PC-9 (cell line): ENCODE measurements at regions of chr2 and their contacts with region 1.

Region 1: DNA sequence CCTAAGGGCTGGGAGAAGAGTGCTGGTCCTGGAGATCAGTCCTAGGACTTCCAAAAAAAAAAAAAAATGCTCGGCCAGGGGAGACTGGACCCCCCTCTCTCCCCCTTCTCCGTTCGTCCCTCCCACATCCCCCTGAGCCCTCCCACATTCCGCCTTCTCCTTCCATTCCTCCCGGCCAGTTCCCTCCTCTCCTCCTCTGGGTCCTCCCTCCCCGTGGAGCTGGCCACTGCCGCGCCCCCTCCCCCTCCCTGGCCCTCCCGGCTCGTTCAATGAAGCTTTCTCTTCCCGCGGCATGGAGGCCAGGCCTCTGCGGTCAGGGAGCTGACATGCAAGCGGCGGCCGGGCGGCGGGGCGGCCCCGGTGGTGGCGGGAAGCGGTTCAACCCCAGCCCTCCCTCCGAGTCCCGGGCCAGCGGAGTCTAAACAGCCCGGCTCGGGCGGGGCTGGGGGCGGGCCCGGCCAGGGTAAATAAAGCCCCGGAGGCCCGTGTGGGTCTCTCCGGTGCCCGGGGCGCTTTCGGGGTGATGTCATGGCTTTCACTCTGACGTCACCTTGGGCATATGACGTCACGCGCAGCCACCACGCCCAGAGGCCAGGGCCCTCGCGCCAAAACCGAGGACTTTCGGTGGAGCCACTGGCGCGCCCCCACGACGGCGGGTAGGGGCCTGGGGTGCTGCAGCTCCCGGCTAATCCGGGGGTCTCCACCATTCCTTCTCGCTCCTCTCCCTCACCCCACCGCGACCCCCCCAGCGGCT is at the start of gene LOXL3:
- DNase-seq: peak; percentile 57 to 74
- H3K4me3 ChIP-seq: peak within 1 kb of the TSS; percentile 78
- H3K27ac ChIP-seq: no peak within 1 kb of the TSS
- H3K4me1 ChIP-seq: peaks cover 16% of the 10 kb centered on the region
- H3K27me3 ChIP-seq: no peaks in the 10 kb centered on the region
- CTCF ChIP-seq: no peak
- total RNA-seq, gene LOXL3: 3.1 and 5.0 TPM in 2 replicates

Region 2: GRCh38 chr2:73385595-73386341 is 1168.3 kb before region 1 on chr2 and contains the start of gene ALMS1:
- CTCF ChIA-PET with region 1: no interaction called
- POLR2A ChIA-PET with region 1: interaction called, 14 read pairs
- intact Hi-C with region 1: no loop called
- DNase-seq: peak; percentile 80 to 86
- H3K4me3 ChIP-seq: peak within 1 kb of the TSS; percentile 99
- H3K27ac ChIP-seq: peak within 1 kb of the TSS; percentile 62
- H3K4me1 ChIP-seq: peaks cover 18% of the 10 kb centered on the region
- H3K27me3 ChIP-seq: peaks cover 21% of the 10 kb centered on the region
- CTCF ChIP-seq: no peak
- total RNA-seq, gene ALMS1: 14.7 and 16.7 TPM in 2 replicates

Region 3: DNA sequence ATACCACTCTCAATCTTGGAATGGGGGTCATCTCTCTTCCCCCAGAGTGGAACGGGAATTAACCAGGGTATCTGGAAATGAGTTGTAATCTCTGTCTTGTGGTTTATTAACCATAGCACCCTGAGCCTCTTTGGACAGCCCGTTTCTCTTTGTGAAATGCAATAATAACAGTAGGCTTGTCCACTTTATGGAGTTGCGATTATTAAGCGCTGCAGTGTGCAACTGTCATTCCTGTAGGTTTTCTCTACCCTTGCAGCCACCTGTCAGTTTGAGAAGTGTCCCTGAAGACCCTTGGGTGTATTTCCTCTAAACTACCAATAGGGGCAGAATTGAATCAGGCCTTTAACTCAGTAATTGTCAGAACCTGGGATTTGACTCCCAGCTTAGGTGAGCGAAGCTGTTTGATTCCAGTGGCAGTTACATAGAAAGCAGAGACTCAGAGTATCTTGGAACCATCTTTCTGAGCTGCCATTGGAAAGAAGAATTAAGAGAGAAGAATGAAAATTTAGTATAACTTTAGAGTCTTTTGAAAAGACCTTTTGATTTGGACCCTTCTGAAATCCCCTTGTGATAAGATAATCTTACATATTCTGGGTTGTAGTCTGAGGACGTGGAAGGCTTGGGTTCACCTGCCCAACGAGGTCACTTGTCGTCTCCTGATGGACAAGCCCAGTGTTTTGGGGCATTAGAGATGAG is 282.4 kb after region 1 on chr2:
- CTCF ChIA-PET with region 1: no interaction called
- POLR2A ChIA-PET with region 1: no interaction called
- intact Hi-C with region 1: no loop called
- DNase-seq: peak in 1 of 2 experiments; percentile 65
- H3K4me3 ChIP-seq: peak overlapping the region; percentile 91
- H3K27ac ChIP-seq: peak overlapping the region; percentile 84
- H3K4me1 ChIP-seq: peaks cover 45% of the 10 kb centered on the region
- H3K27me3 ChIP-seq: no peaks in the 10 kb centered on the region
- CTCF ChIP-seq: peak; percentile 95

Region 4: DNA sequence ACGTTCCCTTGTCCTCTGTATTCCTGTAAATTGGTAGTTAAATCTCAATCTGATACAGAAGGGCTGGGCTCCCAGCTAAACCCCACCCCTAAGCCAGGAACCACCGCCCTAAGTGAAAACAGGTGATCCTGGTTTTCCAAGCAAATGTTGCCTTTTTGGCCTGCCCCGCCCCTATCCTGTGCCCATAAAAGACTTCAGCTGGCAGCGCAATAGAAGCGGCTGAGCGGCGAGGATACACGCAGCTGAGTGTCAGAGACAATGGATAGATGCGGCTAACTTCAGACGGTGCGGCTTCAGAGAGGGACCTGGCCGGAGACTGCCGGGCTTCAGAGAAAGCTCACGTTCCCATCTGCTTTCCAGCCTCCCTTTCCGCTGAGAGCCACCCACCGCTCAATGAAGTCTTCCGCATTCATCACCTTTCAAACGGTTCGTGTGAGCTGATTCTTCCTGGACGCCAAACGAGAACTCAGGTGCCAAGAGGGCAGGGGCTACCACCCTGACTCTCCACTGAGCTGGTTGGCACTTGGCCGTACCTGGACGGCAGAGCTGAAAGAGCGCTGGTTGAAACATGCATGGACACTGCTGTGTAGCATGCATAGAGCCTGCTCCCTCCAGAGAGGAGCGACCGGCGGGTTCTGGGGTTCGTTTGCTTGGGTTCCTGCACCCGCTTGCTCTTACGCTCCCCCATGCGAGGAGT is 354.8 kb after region 1 on chr2:
- CTCF ChIA-PET with region 1: no interaction called
- POLR2A ChIA-PET with region 1: no interaction called
- intact Hi-C with region 1: no loop called
- DNase-seq: no peak
- H3K4me3 ChIP-seq: no peak overlapping the region
- H3K27ac ChIP-seq: no peak overlapping the region
- H3K4me1 ChIP-seq: no peaks in the 10 kb centered on the region
- H3K27me3 ChIP-seq: no peaks in the 10 kb centered on the region
- CTCF ChIP-seq: no peak

Region 5: DNA sequence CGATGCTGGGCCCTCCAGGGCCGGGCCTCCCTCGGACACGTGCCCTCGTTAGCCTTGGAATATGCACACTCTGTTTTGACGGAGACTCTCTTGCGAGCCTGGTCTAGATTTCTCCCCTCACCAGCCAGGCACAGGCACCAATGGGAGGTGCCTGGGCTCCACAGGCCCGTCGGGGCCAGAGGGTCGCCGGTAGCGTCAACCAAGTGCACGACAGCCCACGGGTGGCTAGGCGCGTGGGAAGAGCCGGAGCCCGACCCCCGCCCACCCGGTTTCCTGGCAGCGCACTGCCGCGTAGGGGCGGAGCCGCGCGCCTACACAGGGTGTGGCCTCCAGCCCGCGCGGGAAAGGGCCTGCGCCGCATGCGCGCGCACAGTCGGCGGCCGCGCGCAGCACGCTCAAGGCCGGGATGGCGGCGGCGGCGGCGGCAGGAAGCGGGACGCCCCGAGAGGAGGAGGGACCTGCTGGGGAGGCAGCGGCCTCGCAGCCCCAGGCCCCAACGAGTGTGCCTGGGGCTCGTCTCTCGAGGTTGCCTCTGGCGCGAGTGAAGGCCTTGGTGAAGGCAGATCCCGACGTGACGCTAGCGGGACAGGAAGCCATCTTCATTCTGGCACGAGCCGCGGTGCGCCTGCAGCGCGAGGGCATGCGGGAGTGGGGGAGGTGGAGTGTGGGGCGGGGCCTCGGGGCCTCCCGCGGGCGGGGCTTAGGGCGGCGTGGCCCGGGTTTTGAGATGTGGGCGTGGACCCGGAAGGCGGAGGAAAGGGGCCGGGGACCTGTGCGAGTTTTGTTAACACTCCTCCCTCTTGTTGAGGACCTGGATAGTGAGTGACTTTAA is 404.4 kb after region 1 on chr2 and contains the start of gene POLE4:
- CTCF ChIA-PET with region 1: no interaction called
- POLR2A ChIA-PET with region 1: no interaction called
- intact Hi-C with region 1: no loop called
- DNase-seq: peak; percentile 70 to 87
- H3K4me3 ChIP-seq: peak within 1 kb of the TSS; percentile 91
- H3K27ac ChIP-seq: peak within 1 kb of the TSS; percentile 78
- H3K4me1 ChIP-seq: peaks cover 10% of the 10 kb centered on the region; the same call in 1 of the 2 replicates
- H3K27me3 ChIP-seq: no peaks in the 10 kb centered on the region
- CTCF ChIP-seq: no peak
- total RNA-seq, gene POLE4: 53.8 and 74.4 TPM in 2 replicates